ENCODE measurements at regions of chr9 and their contacts with region 1.

Region 1: GRCh38 chr9:114681594-114682332 is at the start of gene TEX48:
- DNase-seq: peak; percentile 74
- H3K4me3 ChIP-seq: no peak within 1 kb of the TSS
- H3K27ac ChIP-seq: no peak within 1 kb of the TSS
- H3K4me1 ChIP-seq: peaks cover 4% of the 10 kb centered on the region
- CTCF ChIP-seq: peak; percentile 84
- total RNA-seq, gene TEX48: not detected in 2 replicates

Region 2: DNA sequence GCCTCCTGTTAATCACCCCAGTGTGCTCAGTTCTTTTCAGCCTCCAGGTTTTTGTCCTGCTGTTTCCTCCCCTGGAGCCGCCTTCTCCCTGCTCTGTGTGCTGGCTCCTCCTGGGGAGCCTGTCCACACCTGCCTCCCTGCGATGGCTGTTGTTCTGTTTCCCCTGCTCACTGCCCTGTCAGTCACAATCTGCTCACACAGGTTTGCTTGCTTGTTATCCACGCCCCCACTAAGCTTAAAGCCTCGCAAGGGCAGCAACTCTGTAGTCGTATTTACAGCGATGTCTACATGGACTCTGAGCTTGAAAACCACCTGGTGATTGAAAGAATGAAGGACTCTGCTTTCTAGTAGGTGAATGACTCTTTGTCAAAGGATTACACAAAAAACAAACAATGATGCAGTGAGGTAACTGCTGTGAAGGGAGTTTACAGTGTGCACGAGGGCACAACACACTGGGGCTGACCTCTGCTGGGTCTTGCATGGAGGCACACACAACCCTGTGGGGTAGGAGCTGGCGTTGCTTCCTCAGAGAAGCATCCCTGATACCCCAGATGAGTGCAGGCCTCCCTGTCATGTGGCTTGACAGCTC is 39.8 kb after region 1 on chr9:
- CTCF ChIA-PET with region 1: no interaction called
- POLR2A ChIA-PET with region 1: no interaction called
- intact Hi-C with region 1: no loop called
- DNase-seq: no peak
- H3K4me3 ChIP-seq: no peak overlapping the region
- H3K27ac ChIP-seq: no peak overlapping the region
- H3K4me1 ChIP-seq: peaks cover 14% of the 10 kb centered on the region
- CTCF ChIP-seq: no peak

Region 3: DNA sequence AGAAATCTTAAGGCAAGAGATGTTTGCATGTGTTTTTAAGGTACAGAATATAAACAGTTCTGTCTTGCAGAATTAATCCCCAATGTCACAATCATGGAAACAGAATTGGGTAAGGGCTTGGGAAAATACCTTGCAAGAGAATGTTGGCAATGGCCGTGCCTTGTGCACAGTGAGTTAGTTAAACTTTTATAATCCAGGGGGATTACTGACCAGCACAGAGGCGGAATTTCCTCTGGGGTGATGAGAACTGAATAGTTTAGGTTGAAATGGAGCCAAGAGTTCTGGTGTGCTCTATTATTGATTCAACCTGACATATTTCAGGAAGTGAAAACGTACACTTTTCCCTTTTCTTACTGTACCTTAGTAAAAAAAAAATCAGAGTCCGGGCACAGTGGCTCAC is 104.5 kb after region 1 on chr9:
- CTCF ChIA-PET with region 1: no interaction called
- POLR2A ChIA-PET with region 1: no interaction called
- intact Hi-C with region 1: no loop called
- DNase-seq: no peak
- H3K4me3 ChIP-seq: no peak overlapping the region
- H3K27ac ChIP-seq: no peak overlapping the region
- H3K4me1 ChIP-seq: no peaks in the 10 kb centered on the region
- CTCF ChIP-seq: no peak

Region 4: GRCh38 chr9:115013998-115014397 is 332.2 kb after region 1 on chr9:
- CTCF ChIA-PET with region 1: interaction called, 4 read pairs
- POLR2A ChIA-PET with region 1: no interaction called
- intact Hi-C with region 1: loop called (anchors 1 kb)
- DNase-seq: peak; percentile 83
- H3K4me3 ChIP-seq: no peak overlapping the region
- H3K27ac ChIP-seq: no peak overlapping the region
- H3K4me1 ChIP-seq: peaks cover 4% of the 10 kb centered on the region
- CTCF ChIP-seq: peak; percentile 95

Region 5: DNA sequence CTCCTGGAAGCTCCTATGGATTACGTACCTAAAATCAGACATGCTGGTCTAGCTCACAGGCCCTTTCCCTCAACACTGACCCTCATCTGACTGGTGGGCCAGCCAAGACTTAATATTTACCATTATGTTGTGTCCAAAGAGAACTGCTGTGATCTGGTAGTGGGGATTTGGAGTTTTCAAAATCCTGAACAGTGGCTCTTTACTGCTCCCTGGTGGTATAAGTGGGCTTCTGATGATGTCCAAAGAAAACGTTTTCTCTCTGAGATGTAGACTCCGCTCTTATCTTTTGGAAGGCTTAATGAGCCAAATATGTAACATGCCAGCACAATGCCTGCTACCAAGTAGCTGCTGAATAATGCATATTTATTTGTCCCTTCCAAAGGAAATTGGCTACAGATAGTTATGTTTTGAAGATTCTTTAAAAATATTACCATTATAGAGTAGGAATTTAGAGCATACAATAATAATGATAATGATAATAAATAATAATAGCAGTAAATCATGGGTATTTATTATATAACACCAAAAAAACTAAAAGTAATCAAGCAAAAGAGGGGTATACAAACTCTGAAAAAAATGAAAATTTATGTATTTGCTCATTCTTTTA is 842.8 kb after region 1 on chr9:
- CTCF ChIA-PET with region 1: no interaction called
- POLR2A ChIA-PET with region 1: no interaction called
- intact Hi-C with region 1: loop called (anchors 5 kb)
- DNase-seq: peak; percentile 27
- H3K4me3 ChIP-seq: no peak overlapping the region
- H3K27ac ChIP-seq: no peak overlapping the region
- H3K4me1 ChIP-seq: no peaks in the 10 kb centered on the region
- CTCF ChIP-seq: peak; percentile 81